Mammary epithelial cell (primary cell): ENCODE measurements at regions of chr16 and their contacts with region 1.

Region 1: DNA sequence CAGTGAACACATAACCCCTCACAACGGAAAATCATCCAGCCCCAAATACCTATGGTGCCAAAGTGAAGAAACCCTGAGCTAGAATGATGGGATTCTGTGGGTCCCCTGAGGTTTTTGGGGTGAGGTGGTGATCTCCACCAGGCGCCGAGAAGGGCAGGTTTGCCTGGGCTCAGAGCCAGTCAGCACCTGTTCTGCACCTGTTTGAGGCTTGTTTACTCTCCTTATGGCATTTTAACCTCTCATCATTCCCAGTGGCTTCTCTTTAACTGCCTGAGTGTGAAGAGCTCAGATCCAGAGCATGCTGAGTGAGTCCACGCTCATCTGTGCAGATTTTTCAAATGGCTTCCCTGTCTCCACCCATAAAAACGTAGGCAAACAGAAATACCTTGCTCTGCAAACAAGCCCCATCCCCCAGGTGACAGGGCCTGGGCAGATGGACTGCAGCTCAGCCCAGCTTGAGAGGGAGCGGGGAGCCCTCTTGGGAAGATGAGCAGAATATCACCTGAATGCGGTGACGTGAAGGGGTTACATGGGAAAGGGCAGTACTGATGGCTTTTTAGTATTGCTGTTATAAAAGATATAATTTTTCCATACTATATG is 40.1 kb upstream of the CLEC19A start:
- DNase-seq: no peak
- H3K4me3 ChIP-seq: no peak overlapping the region
- H3K27ac ChIP-seq: no peak overlapping the region
- H3K4me1 ChIP-seq: no peaks in the 10 kb centered on the region
- H3K27me3 ChIP-seq: no peaks in the 10 kb centered on the region
- CTCF ChIP-seq: no peak

Region 2: DNA sequence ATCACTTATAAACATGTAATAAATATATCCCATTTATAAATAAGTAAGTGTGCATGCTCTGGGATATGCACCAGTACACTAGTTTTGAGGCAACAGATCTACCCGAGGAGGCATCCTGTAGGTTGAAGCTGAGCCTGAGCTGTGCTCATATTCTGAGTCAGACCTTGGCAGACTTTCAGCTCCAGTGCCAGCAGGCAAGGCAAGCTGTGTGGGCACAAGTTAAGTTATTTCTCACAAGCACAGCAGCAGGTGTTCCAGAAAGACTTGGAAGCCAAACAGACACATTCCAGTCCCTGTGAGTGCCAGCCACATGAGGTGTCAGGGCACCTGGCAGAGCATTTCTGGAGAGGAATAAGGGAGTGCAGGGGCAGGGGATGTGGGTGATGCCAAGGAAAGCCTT is 38.8 kb after region 1 on chr16:
- CTCF ChIA-PET with region 1: no interaction called
- dilution Hi-C with region 1: loop called (anchors 5 kb)
- in situ Hi-C with region 1: no loop called
- intact Hi-C with region 1: no loop called
- DNase-seq: peak; percentile 88
- H3K4me3 ChIP-seq: no peak overlapping the region
- H3K27ac ChIP-seq: no peak overlapping the region
- H3K4me1 ChIP-seq: peaks cover 13% of the 10 kb centered on the region
- H3K27me3 ChIP-seq: peaks cover 4% of the 10 kb centered on the region
- CTCF ChIP-seq: no peak